Transverse colon (tissue), 4 donors: ENCODE measurements at regions of chr3 and their contacts with region 1.

Region 1: GRCh38 chr3:32177702-32178198 is 60.7 kb upstream of the CMTM8 start:
- DNase-seq: peak; percentile 67
- H3K4me3 ChIP-seq: no peak overlapping the region
- H3K27ac ChIP-seq: no peak overlapping the region
- H3K4me1 ChIP-seq: no peaks in the 10 kb centered on the region
- H3K27me3 ChIP-seq: no peaks in the 10 kb centered on the region
- CTCF ChIP-seq: peak; percentile 46 to 69 (median 56)
- EP300 ChIP-seq: no peak
- POLR2A ChIP-seq: no peak

Region 2: DNA sequence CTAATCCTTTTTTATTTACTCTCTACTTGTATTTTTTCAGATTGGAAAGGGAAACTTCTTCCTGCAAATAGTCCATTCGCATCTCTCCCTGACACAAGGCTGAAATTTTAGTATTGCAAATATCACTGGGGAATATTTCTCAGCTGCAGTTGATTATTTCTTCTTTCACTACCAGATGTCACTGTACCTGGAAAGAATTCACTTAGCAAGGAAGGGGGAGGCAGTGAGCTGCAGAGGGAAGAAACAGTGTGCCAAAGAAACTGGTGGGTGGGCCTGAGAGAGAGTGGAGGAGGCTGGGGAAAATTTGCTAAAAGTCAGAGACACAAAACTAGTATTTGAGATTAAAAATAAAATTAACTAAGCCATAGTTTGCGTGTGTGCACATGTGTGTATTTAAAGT is 787.3 kb before region 1 on chr3:
- in situ Hi-C with region 1: no loop called
- intact Hi-C with region 1: no loop called
- DNase-seq: no peak
- H3K4me3 ChIP-seq: no peak overlapping the region
- H3K27ac ChIP-seq: no peak overlapping the region
- H3K4me1 ChIP-seq: no peaks in the 10 kb centered on the region
- H3K27me3 ChIP-seq: no peaks in the 10 kb centered on the region
- CTCF ChIP-seq: no peak
- EP300 ChIP-seq: no peak
- POLR2A ChIP-seq: no peak

Region 3: GRCh38 chr3:32216172-32216783 is 38.5 kb after region 1 on chr3:
- in situ Hi-C with region 1: no loop called
- intact Hi-C with region 1: loop called (anchors 5 kb)
- DNase-seq: peak; percentile 48
- H3K4me3 ChIP-seq: no peak overlapping the region
- H3K27ac ChIP-seq: peak overlapping the region in 1 of 4 donors; percentile 21
- H3K4me1 ChIP-seq: peaks cover 0 to 5% (median 2%) of the 10 kb centered on the region in 4 donors
- H3K27me3 ChIP-seq: no peaks in the 10 kb centered on the region
- CTCF ChIP-seq: no peak
- EP300 ChIP-seq: no peak
- POLR2A ChIP-seq: no peak

Region 4: DNA sequence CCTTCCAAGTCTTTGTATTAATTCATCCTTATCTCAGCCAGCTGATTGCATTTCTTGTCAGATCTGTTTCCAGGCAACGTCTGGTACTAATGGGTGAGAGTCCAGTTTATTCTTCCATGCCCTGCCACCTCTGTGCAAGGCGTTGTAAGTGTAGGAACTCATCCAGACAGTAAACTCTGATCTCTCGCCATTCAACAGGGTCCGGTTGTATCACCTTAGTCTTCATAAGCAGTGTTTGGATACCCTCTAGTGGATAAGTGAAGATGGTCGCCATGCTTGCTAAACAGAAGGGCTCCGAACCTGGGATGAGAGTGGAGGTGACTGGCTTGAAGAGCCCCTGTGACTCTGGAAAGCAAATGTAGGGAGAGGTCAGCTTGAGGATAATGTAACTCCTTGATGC is 162.3 kb after region 1 on chr3:
- in situ Hi-C with region 1: loop called in 1 of 4 experiments (anchors 25 kb)
- intact Hi-C with region 1: no loop called
- DNase-seq: no peak
- H3K4me3 ChIP-seq: no peak overlapping the region
- H3K27ac ChIP-seq: no peak overlapping the region
- H3K4me1 ChIP-seq: peaks cover 0 to 4% (median 0%) of the 10 kb centered on the region in 4 donors
- H3K27me3 ChIP-seq: no peaks in the 10 kb centered on the region
- CTCF ChIP-seq: peak in 3 of 5 experiments; percentile 21 to 30 (median 25)
- EP300 ChIP-seq: no peak
- POLR2A ChIP-seq: no peak